Psoas muscle (tissue), 8 donors: ENCODE measurements at regions of chr19 and their contacts with region 1.

Region 1: DNA sequence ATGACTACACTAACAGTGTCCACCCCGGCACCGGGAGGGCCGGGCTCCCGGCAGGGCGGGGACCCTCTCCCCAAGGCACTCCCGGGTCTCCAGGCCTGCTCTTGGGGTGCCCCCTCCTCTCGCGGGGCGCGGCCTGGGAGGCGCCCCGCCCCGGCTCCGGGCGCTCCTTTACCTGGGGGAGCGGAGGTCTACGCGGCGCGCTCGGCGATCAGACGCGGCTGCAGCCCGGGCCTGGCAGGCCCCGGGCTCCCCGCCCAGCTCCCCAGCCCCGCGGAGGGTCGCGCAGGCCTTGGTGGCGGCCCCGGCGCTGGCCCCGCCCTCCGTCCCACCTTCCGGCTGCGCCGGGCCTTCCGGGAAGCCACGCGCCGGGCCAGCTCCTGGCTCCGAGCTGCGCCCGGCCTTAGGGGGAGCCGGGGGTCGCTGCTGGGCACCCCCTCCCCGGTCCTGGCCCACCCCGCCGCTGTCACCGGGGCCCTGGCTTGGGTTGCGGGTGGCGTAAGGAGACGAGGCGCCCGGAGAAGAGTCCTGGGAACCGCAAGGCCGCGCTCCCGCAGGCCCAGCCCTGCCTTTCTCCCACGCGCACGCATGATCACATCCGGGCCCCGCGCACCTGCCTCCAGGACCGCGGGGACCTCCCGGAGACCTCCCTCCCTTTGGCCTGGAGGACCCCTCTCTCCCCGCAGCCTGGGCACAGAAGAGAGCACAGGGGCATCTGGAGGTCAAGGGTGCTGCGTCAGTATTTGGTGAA is at the start of gene C19orf12:
- DNase-seq: peak; percentile 67 to 81
- ATAC-seq: peak; percentile 85 to 89 (median 88)
- H3K4me3 ChIP-seq: peak within 1 kb of the TSS; percentile 98
- H3K27ac ChIP-seq: peak within 1 kb of the TSS; percentile 93
- H3K4me1 ChIP-seq: peaks cover 18% of the 10 kb centered on the region
- H3K27me3 ChIP-seq: no peaks in the 10 kb centered on the region
- CTCF ChIP-seq: no peak
- total RNA-seq, gene C19orf12: 37.5 to 93.3 (median 55.6) TPM

Region 2: DNA sequence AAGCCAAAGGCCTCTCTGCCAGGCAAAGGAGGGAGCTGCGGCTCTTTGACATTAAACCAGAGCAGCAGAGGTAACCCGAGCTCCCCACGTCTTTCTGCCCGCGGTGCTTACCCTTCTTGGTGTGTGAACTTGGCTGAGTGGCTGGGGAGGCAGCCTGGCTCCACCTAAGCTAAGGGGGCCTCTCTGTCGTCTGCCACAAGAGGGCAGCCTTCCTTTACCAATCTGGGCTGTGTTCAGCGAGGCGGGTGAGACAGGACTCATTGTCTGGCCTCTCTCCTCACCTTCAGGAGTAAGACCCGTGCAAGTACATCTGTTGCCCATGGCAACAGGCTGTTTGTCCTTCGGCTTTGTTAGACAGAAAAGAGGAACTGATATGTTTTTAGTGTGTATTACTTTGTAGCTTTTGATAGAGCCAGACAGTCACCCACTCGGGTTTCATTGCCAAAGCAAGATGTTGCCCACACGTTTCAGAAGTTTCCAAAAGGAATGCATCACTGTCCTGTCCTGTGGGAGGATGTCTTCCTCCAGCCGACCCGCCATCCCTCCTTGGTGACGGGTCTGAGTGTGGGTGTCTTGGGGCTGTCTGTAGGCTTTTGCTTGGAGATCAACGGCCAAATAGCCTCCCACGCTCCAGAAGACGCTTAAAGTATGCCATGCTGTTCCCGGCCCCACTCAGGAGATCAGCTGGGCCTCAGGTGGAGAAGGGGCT is 104.4 kb before region 1 on chr19:
- intact Hi-C with region 1: loop called (anchors 1 to 2 kb)
- DNase-seq: peak; percentile 82 to 90
- ATAC-seq: peak; percentile 83 to 86 (median 86)
- H3K4me3 ChIP-seq: no peak overlapping the region
- H3K27ac ChIP-seq: peak overlapping the region; percentile 71
- H3K4me1 ChIP-seq: peaks cover 16% of the 10 kb centered on the region
- H3K27me3 ChIP-seq: no peaks in the 10 kb centered on the region
- CTCF ChIP-seq: peak; percentile 89

Region 3: DNA sequence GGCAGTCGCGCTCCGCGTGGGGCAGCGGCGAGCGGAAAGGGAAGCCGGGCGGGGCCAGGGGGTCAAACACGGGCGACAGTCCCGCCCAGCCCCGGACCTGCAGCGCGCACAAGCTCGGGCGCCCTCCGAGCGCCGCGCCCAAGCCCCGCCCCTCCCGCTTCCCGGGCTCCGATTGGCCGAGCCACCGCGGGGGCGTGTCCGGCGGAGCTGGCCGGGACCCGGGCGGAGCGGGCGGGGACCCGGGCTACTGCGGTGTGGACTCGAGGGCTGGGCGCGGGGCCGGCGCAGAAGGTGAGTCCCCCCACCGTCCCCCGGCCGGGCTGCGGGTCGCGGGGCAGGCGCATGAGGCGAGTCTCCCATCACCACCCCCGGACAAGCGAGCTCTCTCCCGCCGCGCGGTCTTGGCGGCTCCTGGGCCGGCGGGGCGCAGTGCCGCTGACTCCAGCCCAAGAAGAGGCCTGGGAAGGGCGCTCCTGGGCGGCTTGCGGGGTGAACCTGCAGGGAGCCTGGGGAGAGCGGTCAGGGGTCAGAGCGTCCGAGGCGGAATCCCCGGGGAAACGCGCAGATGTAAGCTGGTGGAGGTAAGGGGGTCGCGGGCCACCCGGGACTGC is 49.8 kb before region 1 on chr19 and contains the start of gene PLEKHF1:
- intact Hi-C with region 1: loop called in 1 of 2 experiments (anchors 5 kb)
- DNase-seq: peak; percentile 93 to 97
- ATAC-seq: peak; percentile 83 to 91 (median 87)
- H3K4me3 ChIP-seq: peak within 1 kb of the TSS; percentile 75
- H3K27ac ChIP-seq: peak within 1 kb of the TSS; percentile 86
- H3K4me1 ChIP-seq: peaks cover 57% of the 10 kb centered on the region
- H3K27me3 ChIP-seq: no peaks in the 10 kb centered on the region
- CTCF ChIP-seq: no peak
- total RNA-seq, gene PLEKHF1: 5.1 to 119 (median 44.0) TPM

Region 4: GRCh38 chr19:29671393-29672160 is 43.5 kb before region 1 on chr19:
- intact Hi-C with region 1: loop called in 1 of 2 experiments (anchors 1 kb)
- DNase-seq: peak; percentile 65 to 88
- ATAC-seq: peak; percentile 77 to 88 (median 84)
- H3K4me3 ChIP-seq: peak overlapping the region; percentile 24
- H3K27ac ChIP-seq: peak overlapping the region; percentile 86
- H3K4me1 ChIP-seq: peaks cover 88% of the 10 kb centered on the region
- H3K27me3 ChIP-seq: no peaks in the 10 kb centered on the region
- CTCF ChIP-seq: peak; percentile 2

Region 5: DNA sequence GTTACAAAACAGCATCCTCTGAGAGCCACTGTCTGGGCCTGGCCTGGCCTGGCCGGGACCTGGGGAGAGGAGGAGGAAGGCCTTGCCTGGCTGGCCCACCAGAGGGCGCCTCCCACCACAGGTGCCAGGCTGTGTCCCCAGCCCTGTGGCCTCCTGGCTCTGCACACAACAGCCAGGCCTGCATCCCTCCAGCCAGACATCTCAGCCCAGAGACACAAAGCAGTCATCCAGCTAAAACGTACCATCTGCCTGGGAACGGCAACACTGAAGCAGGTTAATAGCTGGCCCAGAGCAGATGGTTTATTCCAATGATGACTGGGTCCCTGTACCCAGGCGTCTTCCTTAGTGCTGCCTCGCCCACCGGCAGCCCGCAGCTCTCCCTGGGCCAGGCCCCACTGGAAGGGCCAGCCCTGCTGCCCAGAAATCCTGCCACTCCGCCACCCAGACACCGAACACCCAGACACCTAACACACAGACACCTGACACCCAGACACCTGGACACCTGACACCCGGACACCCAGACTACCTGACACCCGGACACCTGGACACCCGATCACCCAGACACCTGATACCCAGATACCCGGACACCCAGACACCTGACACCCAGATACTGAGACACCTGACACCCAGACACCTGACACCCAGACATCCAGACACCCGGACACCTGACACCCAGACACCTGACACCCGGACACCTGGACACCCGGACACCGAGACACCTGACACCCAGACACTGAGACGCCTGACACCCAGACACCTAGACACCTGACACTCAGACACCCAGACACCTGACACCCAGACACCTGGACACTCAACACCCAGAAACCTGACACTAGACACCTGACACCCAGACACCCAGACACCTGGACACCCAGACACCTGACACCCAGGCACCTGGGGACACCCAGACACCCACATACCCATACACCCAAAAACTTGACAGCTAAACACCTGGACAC is 20.2 kb before region 1 on chr19:
- intact Hi-C with region 1: loop called (anchors 1 to 2 kb)
- DNase-seq: peak; percentile 92 to 95
- ATAC-seq: peak; percentile 92 to 96 (median 94)
- H3K4me3 ChIP-seq: no peak overlapping the region
- H3K27ac ChIP-seq: peak overlapping the region; percentile 46
- H3K4me1 ChIP-seq: peaks cover 9% of the 10 kb centered on the region
- H3K27me3 ChIP-seq: no peaks in the 10 kb centered on the region
- CTCF ChIP-seq: peak; percentile 91